Activated naive CD4-positive, alpha-beta T cell treated with anti-CD3 and anti-CD28 coated beads for 36 hours (primary cell): ENCODE measurements at regions of chr16 and their contacts with region 1.

Region 1: GRCh38 chr16:87765776-87766484 is at the start of gene KLHDC4:
- DNase-seq: peak; percentile 93
- H3K4me3 Mint-ChIP-seq: peak within 1 kb of the TSS; percentile 100
- H3K27ac Mint-ChIP-seq: peak within 1 kb of the TSS; percentile 96
- H3K4me1 Mint-ChIP-seq: peaks cover 43% of the 10 kb centered on the region
- H3K27me3 Mint-ChIP-seq: no peaks in the 10 kb centered on the region
- total RNA-seq, gene KLHDC4: 56.2 to 62.4 TPM

Region 2: DNA sequence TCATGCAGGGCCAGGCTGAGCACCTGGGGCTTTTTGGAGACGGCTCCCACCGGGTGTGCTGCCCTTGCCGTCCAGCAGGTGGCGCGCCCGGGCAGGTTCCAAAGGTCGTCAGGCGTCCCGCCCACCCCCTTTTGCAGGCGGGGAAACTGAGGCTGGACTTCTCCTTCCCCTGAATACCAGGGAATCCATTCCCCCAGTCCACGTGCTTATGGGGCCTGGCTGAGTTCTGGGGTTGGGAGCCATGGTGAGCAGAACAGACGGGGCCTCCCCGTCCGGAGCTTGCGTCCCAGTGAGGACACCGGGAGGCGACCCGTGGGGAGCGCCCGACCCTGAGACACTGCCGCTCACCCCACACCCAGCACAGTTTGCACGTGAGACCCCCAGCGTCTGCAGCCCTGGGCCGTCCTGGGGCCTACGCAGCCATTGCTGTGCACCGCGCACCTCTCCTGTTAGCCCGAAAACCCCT is 215.4 kb before region 1 on chr16:
- CTCF ChIA-PET with region 1: no interaction called
- intact Hi-C with region 1: loop called (anchors 2 kb)
- DNase-seq: peak; percentile 69
- H3K4me3 Mint-ChIP-seq: no peak overlapping the region
- H3K27ac Mint-ChIP-seq: no peak overlapping the region
- H3K4me1 Mint-ChIP-seq: no peaks in the 10 kb centered on the region
- H3K27me3 Mint-ChIP-seq: peaks cover 14% of the 10 kb centered on the region

Region 3: GRCh38 chr16:87653234-87653633 is 112.7 kb before region 1 on chr16:
- CTCF ChIA-PET with region 1: no interaction called
- intact Hi-C with region 1: loop called (anchors 10 kb)
- DNase-seq: peak; percentile 12
- H3K4me3 Mint-ChIP-seq: no peak overlapping the region
- H3K27ac Mint-ChIP-seq: no peak overlapping the region
- H3K4me1 Mint-ChIP-seq: no peaks in the 10 kb centered on the region
- H3K27me3 Mint-ChIP-seq: no peaks in the 10 kb centered on the region

Region 4: DNA sequence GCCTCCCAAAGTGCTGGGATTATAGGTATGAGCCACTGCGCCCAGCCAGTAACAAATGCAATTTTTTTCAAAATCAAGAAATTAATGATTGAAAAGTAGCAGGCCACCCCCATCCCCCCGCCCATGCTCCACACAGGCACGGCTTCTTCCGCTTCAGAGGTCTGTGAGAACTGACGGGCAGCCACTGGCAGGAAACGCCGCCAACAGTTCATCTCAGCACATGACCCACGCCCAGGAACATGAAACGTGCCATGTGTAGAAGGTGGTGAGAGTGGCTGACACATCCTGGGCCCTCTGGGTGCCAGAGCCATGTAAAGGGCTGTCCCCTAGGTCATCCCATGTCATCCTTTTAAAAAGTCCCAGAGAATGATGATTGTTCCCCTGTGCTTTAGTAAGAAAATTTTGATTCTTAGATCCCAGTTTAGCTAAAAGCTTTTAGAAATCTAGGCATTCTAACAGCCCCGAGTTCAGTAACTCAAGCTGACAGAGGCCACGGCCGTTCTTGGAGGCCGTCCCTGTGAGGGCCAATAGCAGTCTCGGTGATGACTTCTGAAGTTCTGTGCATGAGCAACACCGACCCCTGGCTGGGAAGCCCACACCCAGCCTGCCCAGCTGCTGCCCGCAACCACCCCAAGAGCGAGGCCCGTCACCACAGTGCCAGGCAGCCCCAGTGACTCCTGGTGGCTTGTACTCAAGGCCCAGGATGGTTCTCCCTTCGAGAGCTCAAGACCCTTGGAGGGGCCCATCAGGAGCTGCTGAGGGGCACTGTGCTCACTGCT is 52.3 kb before region 1 on chr16:
- CTCF ChIA-PET with region 1: no interaction called
- intact Hi-C with region 1: loop called (anchors 5 kb)
- DNase-seq: peak; percentile 87
- H3K4me3 Mint-ChIP-seq: no peak overlapping the region
- H3K27ac Mint-ChIP-seq: peak overlapping the region; percentile 83
- H3K4me1 Mint-ChIP-seq: peaks cover 30% of the 10 kb centered on the region
- H3K27me3 Mint-ChIP-seq: no peaks in the 10 kb centered on the region

Region 5: GRCh38 chr16:87881324-87882200 is 115.6 kb after region 1 on chr16:
- CTCF ChIA-PET with region 1: no interaction called
- intact Hi-C with region 1: no loop called
- DNase-seq: no peak
- H3K4me3 Mint-ChIP-seq: no peak overlapping the region
- H3K27ac Mint-ChIP-seq: no peak overlapping the region
- H3K4me1 Mint-ChIP-seq: peaks cover 15% of the 10 kb centered on the region
- H3K27me3 Mint-ChIP-seq: peaks cover 5% of the 10 kb centered on the region

Region 6: DNA sequence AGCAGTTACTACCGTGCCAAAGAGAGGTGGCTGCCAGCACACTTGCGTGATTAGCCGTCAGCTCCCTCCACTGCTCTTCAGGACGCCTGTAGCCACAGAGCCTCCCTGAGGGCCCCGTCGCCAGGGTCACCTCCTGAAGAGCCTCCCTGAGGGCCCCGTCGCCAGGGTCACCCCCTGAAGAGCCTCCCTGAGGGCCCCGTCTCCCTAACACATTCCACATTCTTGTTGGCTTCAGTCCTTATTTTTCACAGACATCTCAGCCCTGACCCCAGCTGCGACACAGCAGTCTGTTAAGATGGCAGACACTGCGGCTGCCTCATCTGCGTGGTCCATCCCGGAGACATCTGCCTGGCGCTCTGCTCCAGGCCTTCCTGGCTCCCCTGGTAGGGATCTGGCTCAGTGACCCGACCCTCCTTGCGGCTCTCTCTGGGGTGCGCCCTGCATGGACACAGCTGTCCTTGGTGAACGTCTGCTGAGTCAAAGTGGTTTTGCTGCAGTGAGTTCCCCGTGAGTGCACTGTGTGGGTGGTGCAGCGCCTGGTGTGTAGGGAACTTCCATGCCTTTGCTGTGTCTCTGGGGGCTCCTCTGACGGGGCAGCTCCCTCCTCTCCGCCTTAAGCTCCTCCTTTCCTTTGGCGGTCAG is 1339.1 kb after region 1 on chr16:
- CTCF ChIA-PET with region 1: no interaction called
- intact Hi-C with region 1: no loop called
- DNase-seq: no peak
- H3K4me3 Mint-ChIP-seq: no peak overlapping the region
- H3K27ac Mint-ChIP-seq: no peak overlapping the region
- H3K4me1 Mint-ChIP-seq: peaks cover 23% of the 10 kb centered on the region
- H3K27me3 Mint-ChIP-seq: no peaks in the 10 kb centered on the region